ENCODE measurements at regions of chr11 and their contacts with region 1.

Region 1: GRCh38 chr11:127345819-127346459 is 345.4 kb upstream of the KIRREL3 start:
- DNase-seq: peak in 1 of 2 donors; percentile 63
- H3K4me3 ChIP-seq: no peak overlapping the region
- H3K27ac ChIP-seq: no peak overlapping the region
- H3K4me1 ChIP-seq: no peaks in the 10 kb centered on the region
- H3K27me3 ChIP-seq: no peaks in the 10 kb centered on the region
- CTCF ChIP-seq: peak in 4 of 7 experiments; percentile 40 to 43 (median 42)
- EP300 ChIP-seq: no peak
- POLR2A ChIP-seq: no peak

Region 2: GRCh38 chr11:126431401-126432064 is 914.4 kb before region 1 on chr11:
- intact Hi-C with region 1: loop called (anchors 10 kb)
- DNase-seq: peak in 1 of 2 donors; percentile 38
- H3K4me3 ChIP-seq: no peak overlapping the region
- H3K27ac ChIP-seq: peak overlapping the region in 4 of 5 donors; percentile 59 to 67 (median 64)
- H3K4me1 ChIP-seq: peaks cover 0 to 19% (median 9%) of the 10 kb centered on the region in 4 donors
- H3K27me3 ChIP-seq: no peaks in the 10 kb centered on the region
- CTCF ChIP-seq: no peak
- EP300 ChIP-seq: no peak
- POLR2A ChIP-seq: no peak

Measured in stomach (tissue), 19 donors.